ENCODE measurements at regions of chr17 and their contacts with region 1.

Region 1: GRCh38 chr17:40309031-40309948 is at the start of gene RARA:
- DNase-seq: peak; percentile 51
- ATAC-seq: peak; percentile 74
- H3K4me3 ChIP-seq: peak within 1 kb of the TSS; percentile 78 to 89 (median 88)
- H3K27ac ChIP-seq: no peak within 1 kb of the TSS
- H3K4me1 ChIP-seq: peaks cover 76% of the 10 kb centered on the region
- H3K27me3 ChIP-seq: no peaks in the 10 kb centered on the region; a peak in 1 of 5 replicates
- CTCF ChIP-seq: no peak; the same call in 1 of the 2 replicates
- EP300 ChIP-seq: no peak
- POLR2A ChIP-seq: no peak
- RAD21 ChIP-seq: peak; percentile 35
- total RNA-seq, gene RARA: 8.6 and 8.9 TPM in 2 replicates

Region 2: GRCh38 chr17:40287494-40288369 is 21.6 kb before region 1 on chr17 and contains the start of gene CDC6:
- CTCF ChIA-PET with region 1: no interaction called
- POLR2A ChIA-PET with region 1: no interaction called
- in situ Hi-C with region 1: no loop called
- intact Hi-C with region 1: no loop called
- DNase-seq: peak; percentile 100
- ATAC-seq: peak; percentile 95
- H3K4me3 ChIP-seq: peak within 1 kb of the TSS; percentile 81 to 99 (median 92)
- H3K27ac ChIP-seq: peak within 1 kb of the TSS; percentile 92
- H3K4me1 ChIP-seq: peaks cover 72% of the 10 kb centered on the region
- H3K27me3 ChIP-seq: no peaks in the 10 kb centered on the region
- CTCF ChIP-seq: peak; percentile 5; the same call in 1 of the 2 replicates
- EP300 ChIP-seq: peak; percentile 5 to 16; a peak in 1 of 4 replicates
- POLR2A ChIP-seq: peak; percentile 89 to 98
- RAD21 ChIP-seq: no peak
- total RNA-seq, gene CDC6: 114 and 154 TPM in 2 replicates

Region 3: GRCh38 chr17:40349920-40350909 is 40.9 kb after region 1 on chr17:
- CTCF ChIA-PET with region 1: interaction called, 157 read pairs
- POLR2A ChIA-PET with region 1: interaction called, 35 read pairs
- in situ Hi-C with region 1: no loop called
- intact Hi-C with region 1: no loop called
- DNase-seq: no peak
- ATAC-seq: no peak
- H3K4me3 ChIP-seq: no peak overlapping the region
- H3K27ac ChIP-seq: no peak overlapping the region
- H3K4me1 ChIP-seq: peaks cover 73% of the 10 kb centered on the region
- H3K27me3 ChIP-seq: no peaks in the 10 kb centered on the region
- CTCF ChIP-seq: no peak
- EP300 ChIP-seq: no peak
- POLR2A ChIP-seq: no peak
- RAD21 ChIP-seq: no peak